Activated CD4-positive, alpha-beta T cell treated with anti-CD3 and anti-CD28 coated beads for 36 hours (primary cell): ENCODE measurements at regions of chr1 and their contacts with region 1.

Region 1: DNA sequence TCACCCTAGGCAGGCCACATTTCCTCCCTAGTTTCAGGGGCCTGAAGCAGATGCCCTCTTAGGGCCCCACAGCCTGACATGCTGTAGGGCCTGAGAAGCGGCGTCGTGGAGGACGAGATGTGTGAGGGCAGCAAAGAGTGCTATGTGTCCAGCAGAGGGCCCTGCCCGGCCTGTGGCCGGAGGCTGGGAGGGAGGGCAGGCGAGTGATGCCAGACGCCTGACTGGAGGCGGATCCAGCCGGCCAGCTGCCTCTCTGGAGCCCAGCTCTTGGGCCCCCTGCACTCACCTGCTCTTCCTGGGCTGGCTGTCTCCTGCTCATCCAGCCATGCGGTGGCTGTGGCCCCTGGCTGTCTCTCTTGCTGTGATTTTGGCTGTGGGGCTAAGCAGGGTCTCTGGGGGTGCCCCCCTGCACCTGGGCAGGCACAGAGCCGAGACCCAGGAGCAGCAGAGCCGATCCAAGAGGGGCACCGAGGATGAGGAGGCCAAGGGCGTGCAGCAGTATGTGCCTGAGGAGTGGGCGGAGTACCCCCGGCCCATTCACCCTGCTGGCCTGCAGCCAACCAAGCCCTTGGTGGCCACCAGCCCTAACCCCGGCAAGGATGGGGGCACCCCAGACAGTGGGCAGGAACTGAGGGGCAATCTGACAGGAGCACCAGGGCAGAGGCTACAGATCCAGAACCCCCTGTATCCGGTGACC is at the start of gene GPR37L1:
- DNase-seq: no peak
- ATAC-seq: no peak
- H3K4me3 Mint-ChIP-seq: no peak within 1 kb of the TSS
- H3K27ac Mint-ChIP-seq: no peak within 1 kb of the TSS
- H3K4me1 Mint-ChIP-seq: no peaks in the 10 kb centered on the region
- H3K27me3 Mint-ChIP-seq: no peaks in the 10 kb centered on the region
- total RNA-seq, gene GPR37L1: not detected

Region 2: DNA sequence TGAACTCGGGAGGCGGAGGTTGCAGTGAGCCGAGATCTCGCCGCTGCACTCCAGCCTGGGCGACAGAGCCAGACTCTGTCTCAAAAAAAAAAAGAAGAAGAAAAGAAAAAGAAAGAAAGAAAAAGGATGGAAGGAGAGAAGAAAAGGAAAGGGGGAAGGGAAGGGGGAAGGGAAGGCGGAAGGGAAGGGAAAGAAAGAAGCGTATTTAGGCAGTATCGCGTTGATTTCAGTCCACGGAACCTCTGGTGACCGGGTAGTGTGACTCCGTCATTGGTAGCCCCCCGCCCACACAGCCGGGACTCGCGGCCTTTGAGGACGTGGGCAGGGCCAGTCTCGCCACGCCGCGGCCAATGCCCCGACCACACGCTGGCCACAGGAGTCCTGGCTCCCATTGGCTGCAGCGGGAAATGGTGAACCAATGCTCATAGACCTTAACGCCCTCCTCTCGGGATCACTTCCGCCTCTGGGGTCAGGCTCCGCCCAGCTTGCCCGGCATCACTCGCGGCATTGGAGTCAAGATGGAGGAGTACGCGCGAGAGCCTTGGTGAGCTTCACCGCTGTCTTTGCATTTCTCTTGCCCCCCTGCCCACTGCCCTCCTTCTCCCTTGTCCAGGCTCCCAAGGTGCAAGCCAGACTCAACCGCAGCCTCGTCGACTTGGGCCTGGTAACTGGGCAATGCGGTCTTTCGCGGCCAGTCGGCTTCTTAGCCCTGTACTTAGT is 167.6 kb before region 1 on chr1 and contains the start of gene TIMM17A:
- CTCF ChIA-PET with region 1: no interaction called
- POLR2A ChIA-PET with region 1: no interaction called
- intact Hi-C with region 1: no loop called
- DNase-seq: peak; percentile 97
- ATAC-seq: peak; percentile 100
- H3K4me3 Mint-ChIP-seq: peak within 1 kb of the TSS; percentile 99
- H3K27ac Mint-ChIP-seq: peak within 1 kb of the TSS; percentile 97
- H3K4me1 Mint-ChIP-seq: peaks cover 16% of the 10 kb centered on the region
- H3K27me3 Mint-ChIP-seq: no peaks in the 10 kb centered on the region
- total RNA-seq, gene TIMM17A: 51.9 to 70.6 TPM

Region 3: GRCh38 chr1:202009326-202010179 is 113.2 kb before region 1 on chr1:
- CTCF ChIA-PET with region 1: no interaction called
- POLR2A ChIA-PET with region 1: no interaction called
- intact Hi-C with region 1: loop called (anchors 1 kb)
- DNase-seq: peak; percentile 76
- ATAC-seq: peak; percentile 78
- H3K4me3 Mint-ChIP-seq: no peak overlapping the region
- H3K27ac Mint-ChIP-seq: no peak overlapping the region
- H3K4me1 Mint-ChIP-seq: no peaks in the 10 kb centered on the region
- H3K27me3 Mint-ChIP-seq: no peaks in the 10 kb centered on the region

Region 4: DNA sequence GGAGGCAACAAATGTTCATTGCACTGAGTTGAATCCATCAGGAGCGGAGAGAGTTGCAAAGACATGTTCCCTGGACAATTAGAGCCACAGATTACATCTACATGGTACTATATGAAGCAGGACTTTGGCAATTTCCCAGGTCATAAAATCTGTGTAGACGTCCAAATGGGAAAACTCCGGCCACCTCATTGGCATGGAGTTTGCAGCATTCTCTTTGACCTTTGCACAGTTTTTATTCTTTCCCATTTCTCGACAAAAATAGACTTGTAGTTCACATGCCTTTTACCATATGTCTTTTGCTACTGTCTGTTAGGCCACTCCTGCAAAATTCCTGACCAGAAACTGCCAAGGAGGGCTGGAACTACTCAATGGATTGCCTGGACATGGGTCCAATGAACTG is 170.8 kb after region 1 on chr1:
- CTCF ChIA-PET with region 1: no interaction called
- POLR2A ChIA-PET with region 1: no interaction called
- intact Hi-C with region 1: no loop called
- DNase-seq: no peak
- ATAC-seq: no peak
- H3K4me3 Mint-ChIP-seq: no peak overlapping the region
- H3K27ac Mint-ChIP-seq: no peak overlapping the region
- H3K4me1 Mint-ChIP-seq: peaks cover 20% of the 10 kb centered on the region
- H3K27me3 Mint-ChIP-seq: no peaks in the 10 kb centered on the region